Mammary epithelial cell (primary cell): ENCODE measurements at regions of chr4 and their contacts with region 1.

Region 1: GRCh38 chr4:177005674-177006230 is 213.0 kb upstream of the VEGFC start:
- DNase-seq: peak; percentile 95
- H3K4me3 ChIP-seq: no peak overlapping the region
- H3K27ac ChIP-seq: peak overlapping the region; percentile 100
- H3K4me1 ChIP-seq: peaks cover 50% of the 10 kb centered on the region
- H3K27me3 ChIP-seq: no peaks in the 10 kb centered on the region
- CTCF ChIP-seq: no peak

Region 2: GRCh38 chr4:176195184-176195978 is 810.4 kb before region 1 on chr4 and contains the start of gene SPATA4:
- CTCF ChIA-PET with region 1: no interaction called
- dilution Hi-C with region 1: no loop called
- in situ Hi-C with region 1: no loop called
- intact Hi-C with region 1: loop called (anchors 5 kb)
- DNase-seq: peak; percentile 84
- H3K4me3 ChIP-seq: peak within 1 kb of the TSS; percentile 79 to 84 (median 83)
- H3K27ac ChIP-seq: peak within 1 kb of the TSS; percentile 98
- H3K4me1 ChIP-seq: peaks cover 31% of the 10 kb centered on the region
- H3K27me3 ChIP-seq: no peaks in the 10 kb centered on the region
- CTCF ChIP-seq: no peak
- total RNA-seq, gene SPATA4: 0.17 to 0.94 TPM

Region 3: GRCh38 chr4:176902710-176903323 is 102.9 kb before region 1 on chr4:
- CTCF ChIA-PET with region 1: no interaction called
- dilution Hi-C with region 1: no loop called
- in situ Hi-C with region 1: no loop called
- intact Hi-C with region 1: loop called (anchors 2 kb)
- DNase-seq: peak; percentile 90
- H3K4me3 ChIP-seq: peak overlapping the region in 1 of 3 experiments; percentile 5
- H3K27ac ChIP-seq: peak overlapping the region; percentile 70
- H3K4me1 ChIP-seq: peaks cover 25% of the 10 kb centered on the region
- H3K27me3 ChIP-seq: no peaks in the 10 kb centered on the region
- CTCF ChIP-seq: no peak

Region 4: DNA sequence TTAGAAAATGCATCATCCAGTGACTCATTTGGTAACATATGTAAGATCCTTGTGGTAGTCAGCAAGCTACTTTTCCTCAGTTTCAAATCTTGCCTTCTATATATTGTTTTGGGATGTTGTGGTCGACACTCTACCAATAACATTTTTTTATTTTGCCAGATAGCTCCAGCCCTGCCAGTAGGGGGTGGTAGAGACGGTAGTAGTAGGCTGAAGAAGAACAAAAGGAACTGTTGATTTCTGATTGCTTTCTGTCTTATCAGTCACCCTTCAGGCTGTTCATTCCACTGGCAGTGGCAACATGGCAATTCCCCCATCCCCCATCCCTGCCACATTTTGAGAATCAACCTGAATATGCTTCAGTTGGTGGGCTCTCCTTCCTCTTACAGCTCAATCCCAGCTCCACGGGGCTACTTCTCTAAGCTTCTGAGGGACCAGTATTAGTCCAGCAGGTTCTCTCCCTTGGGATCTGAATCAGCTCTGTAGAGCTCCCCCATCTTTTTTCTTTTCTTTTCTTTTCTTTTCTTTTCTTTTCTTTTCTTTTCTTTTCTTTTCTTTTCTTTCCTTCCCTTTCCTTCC is 41.5 kb before region 1 on chr4:
- CTCF ChIA-PET with region 1: no interaction called
- dilution Hi-C with region 1: no loop called
- in situ Hi-C with region 1: no loop called
- intact Hi-C with region 1: loop called (anchors 2 kb)
- DNase-seq: peak; percentile 32
- H3K4me3 ChIP-seq: no peak overlapping the region
- H3K27ac ChIP-seq: no peak overlapping the region
- H3K4me1 ChIP-seq: no peaks in the 10 kb centered on the region
- H3K27me3 ChIP-seq: no peaks in the 10 kb centered on the region
- CTCF ChIP-seq: peak; percentile 46 to 63

Region 5: GRCh38 chr4:176988226-176988625 is 17.5 kb before region 1 on chr4:
- CTCF ChIA-PET with region 1: no interaction called
- dilution Hi-C with region 1: no loop called
- in situ Hi-C with region 1: no loop called
- intact Hi-C with region 1: loop called (anchors 2 kb)
- DNase-seq: peak; percentile 95
- H3K4me3 ChIP-seq: no peak overlapping the region
- H3K27ac ChIP-seq: peak overlapping the region; percentile 87
- H3K4me1 ChIP-seq: peaks cover 6% of the 10 kb centered on the region
- H3K27me3 ChIP-seq: no peaks in the 10 kb centered on the region
- CTCF ChIP-seq: no peak

Region 6: DNA sequence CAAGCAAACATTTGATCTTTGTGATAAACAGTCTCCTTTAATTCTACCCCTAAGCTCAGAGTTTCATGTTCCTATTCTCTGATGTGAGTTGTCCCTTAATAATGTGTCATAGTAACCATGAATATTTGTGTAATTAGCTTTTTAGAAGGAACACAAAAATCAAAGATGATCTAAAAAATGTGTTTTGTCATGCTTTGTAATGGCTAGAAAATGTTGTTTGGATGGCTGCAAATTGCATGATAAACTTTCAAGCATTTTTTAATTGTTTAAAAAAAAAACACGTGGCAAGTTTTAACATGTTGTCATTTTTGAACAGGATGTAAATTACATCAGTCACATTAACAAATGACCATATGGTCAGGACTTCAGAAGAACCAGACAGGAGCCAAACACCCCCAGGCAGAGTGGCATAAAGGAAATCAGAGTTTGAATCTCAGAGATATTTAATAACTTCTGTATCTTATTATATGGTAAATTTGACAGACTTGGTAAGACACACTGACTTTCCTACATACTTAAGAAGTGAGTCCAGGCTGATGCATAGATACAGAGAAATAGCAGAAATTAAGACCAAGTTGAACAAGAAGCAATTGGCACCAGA is 10.9 kb after region 1 on chr4:
- CTCF ChIA-PET with region 1: no interaction called
- dilution Hi-C with region 1: no loop called
- in situ Hi-C with region 1: no loop called
- intact Hi-C with region 1: loop called (anchors 1 kb)
- DNase-seq: peak; percentile 79
- H3K4me3 ChIP-seq: no peak overlapping the region
- H3K27ac ChIP-seq: peak overlapping the region; percentile 88
- H3K4me1 ChIP-seq: peaks cover 13% of the 10 kb centered on the region
- H3K27me3 ChIP-seq: no peaks in the 10 kb centered on the region
- CTCF ChIP-seq: no peak

Region 7: DNA sequence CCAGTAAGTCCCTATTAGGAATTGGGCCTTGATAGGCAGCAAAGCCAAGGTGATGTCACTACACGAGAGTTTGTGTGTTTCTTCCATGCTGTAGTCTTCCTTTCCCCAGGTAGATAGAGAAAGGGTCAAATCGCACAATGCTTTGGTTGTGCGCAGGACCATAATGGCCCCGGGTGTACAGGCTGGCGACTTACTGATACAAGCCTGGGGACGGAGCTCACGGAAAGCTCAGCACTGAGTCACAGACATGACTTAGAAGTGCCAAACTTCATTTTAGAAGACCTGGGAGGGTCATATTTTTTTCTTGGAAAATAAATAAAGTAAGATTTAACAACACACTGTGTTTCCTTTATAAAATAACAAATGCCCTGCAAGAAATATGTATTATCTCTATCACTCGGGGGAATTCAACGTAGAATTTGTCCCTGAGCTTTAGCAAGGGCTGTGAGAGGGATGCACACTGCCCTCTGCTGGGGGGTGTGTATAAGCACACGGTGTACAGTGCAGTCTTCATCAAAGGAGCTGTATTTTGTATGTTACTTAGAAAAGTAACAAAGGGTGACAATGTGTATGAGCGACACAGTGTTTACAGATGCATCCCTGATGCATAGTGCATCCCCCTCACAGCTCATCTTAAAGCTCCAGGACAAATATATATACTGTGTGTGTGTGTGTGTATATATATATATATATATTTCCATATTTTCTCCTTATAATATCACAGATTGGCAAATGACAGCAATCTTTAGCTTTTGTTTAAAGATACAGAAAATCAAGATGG is 41.5 kb after region 1 on chr4:
- CTCF ChIA-PET with region 1: interaction called, 3 read pairs
- dilution Hi-C with region 1: no loop called
- in situ Hi-C with region 1: no loop called
- intact Hi-C with region 1: loop called (anchors 1 kb)
- DNase-seq: peak; percentile 49
- H3K4me3 ChIP-seq: no peak overlapping the region
- H3K27ac ChIP-seq: no peak overlapping the region
- H3K4me1 ChIP-seq: no peaks in the 10 kb centered on the region
- H3K27me3 ChIP-seq: no peaks in the 10 kb centered on the region
- CTCF ChIP-seq: peak; percentile 85 to 88

Region 8: GRCh38 chr4:177079327-177079726 is 73.6 kb after region 1 on chr4:
- CTCF ChIA-PET with region 1: no interaction called
- dilution Hi-C with region 1: no loop called
- in situ Hi-C with region 1: no loop called
- intact Hi-C with region 1: no loop called
- DNase-seq: no peak
- H3K4me3 ChIP-seq: no peak overlapping the region
- H3K27ac ChIP-seq: no peak overlapping the region
- H3K4me1 ChIP-seq: no peaks in the 10 kb centered on the region
- H3K27me3 ChIP-seq: no peaks in the 10 kb centered on the region
- CTCF ChIP-seq: no peak